Head of caudate nucleus (tissue), 42 donors: ENCODE measurements at regions of chr4 and their contacts with region 1.

Region 1: GRCh38 chr4:120156120-120156718 is 89.6 kb upstream of the MAD2L1 start:
- DNase-seq: peak in 16 of 42 donors; percentile 3 to 64 (median 39)

Region 2: GRCh38 chr4:120139392-120139791 is 16.8 kb before region 1 on chr4:
- intact Hi-C with region 1: no loop called
- DNase-seq: no peak

Region 3: GRCh38 chr4:121096629-121097028 is 940.4 kb after region 1 on chr4:
- intact Hi-C with region 1: loop called (anchors 5 kb)
- DNase-seq: no peak